ENCODE measurements at regions of chr3 and their contacts with region 1.

Region 1: DNA sequence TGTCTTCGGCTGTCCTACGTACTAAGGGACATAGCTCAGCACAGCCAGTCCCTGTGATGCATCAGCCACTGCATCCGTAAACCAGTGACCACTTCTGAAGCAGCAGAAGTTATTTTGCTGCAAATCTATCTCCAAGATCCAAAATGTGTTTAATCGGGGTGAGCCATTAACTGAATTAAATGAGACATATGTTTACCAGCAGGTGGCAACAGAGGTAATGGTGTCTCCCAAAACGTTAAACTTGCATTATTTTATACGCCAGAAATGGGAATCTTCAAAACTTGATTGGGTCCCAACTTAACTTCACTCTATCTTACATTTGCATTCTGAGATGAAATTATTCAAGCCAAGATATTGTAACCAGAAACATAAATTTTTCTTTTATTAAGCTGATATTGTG is 75.3 kb upstream of the BOC start:
- DNase-seq: no peak
- H3K4me3 ChIP-seq: no peak overlapping the region
- H3K27ac ChIP-seq: no peak overlapping the region
- H3K4me1 ChIP-seq: no peaks in the 10 kb centered on the region
- H3K27me3 ChIP-seq: no peaks in the 10 kb centered on the region
- CTCF ChIP-seq: peak; percentile 74

Region 2: GRCh38 chr3:113117511-113118234 is 18.4 kb before region 1 on chr3:
- CTCF ChIA-PET with region 1: no interaction called
- POLR2A ChIA-PET with region 1: no interaction called
- intact Hi-C with region 1: no loop called
- DNase-seq: no peak
- H3K4me3 ChIP-seq: no peak overlapping the region
- H3K27ac ChIP-seq: no peak overlapping the region
- H3K4me1 ChIP-seq: no peaks in the 10 kb centered on the region
- H3K27me3 ChIP-seq: no peaks in the 10 kb centered on the region
- CTCF ChIP-seq: no peak

Region 3: DNA sequence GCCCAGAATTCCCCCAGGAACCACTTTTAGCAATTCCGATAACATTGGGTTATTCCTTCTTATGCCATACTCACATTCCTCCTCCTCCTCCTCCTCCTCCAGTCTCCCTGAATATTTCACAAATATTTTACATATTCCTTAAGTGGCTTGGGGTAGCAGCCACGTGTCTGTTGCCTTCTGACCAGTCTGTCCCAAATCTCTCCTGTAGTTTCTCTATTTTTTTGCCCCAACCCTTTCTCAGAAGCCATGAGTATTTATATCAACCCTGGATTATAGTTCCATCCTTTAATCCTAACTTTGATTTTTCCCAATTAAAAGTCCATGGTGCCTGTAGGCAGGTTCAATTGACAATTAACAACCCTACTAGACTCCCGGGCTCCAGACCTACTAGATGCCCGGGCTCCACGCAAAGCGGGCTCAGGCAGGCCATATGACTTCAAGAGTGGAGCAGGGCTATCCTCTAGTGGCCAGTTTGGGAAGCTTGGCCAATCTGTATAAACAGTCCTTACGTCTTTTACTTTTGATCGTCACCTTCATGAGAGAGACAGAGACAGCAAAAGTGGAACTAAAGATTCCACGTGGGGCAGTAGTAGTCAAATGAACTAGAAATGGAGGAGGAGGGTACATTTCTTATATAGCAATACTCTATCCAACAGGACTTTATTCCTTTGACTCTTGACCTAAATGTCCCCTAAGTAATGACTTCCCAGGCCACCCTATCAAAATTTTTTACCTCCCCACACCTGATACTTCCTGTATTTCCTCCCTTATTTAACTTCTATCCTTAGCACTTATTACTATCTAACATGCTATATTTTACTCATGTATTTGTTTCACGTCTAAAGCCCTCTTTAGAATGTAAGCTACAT is 490.7 kb after region 1 on chr3:
- CTCF ChIA-PET with region 1: no interaction called
- POLR2A ChIA-PET with region 1: no interaction called
- intact Hi-C with region 1: loop called (anchors 10 kb)
- DNase-seq: peak; percentile 41
- H3K4me3 ChIP-seq: no peak overlapping the region
- H3K27ac ChIP-seq: no peak overlapping the region
- H3K4me1 ChIP-seq: 0 out of 2 replicates have a peak, but pooled peaks cover 4% of the 10 kb centered on the region
- H3K27me3 ChIP-seq: no peaks in the 10 kb centered on the region
- CTCF ChIP-seq: peak; percentile 86